ENCODE measurements at regions of chr9 and their contacts with region 1.

Region 1: GRCh38 chr9:98097836-98098235 is 21.2 kb downstream of the TRIM14 start:
- DNase-seq: peak in 1 of 3 donors; percentile 15
- H3K4me3 ChIP-seq: no peak overlapping the region
- H3K27ac ChIP-seq: no peak overlapping the region
- H3K4me1 ChIP-seq: peaks cover 17 to 34% (median 31%) of the 10 kb centered on the region in 4 experiments
- H3K27me3 ChIP-seq: no peaks in the 10 kb centered on the region

Region 2: DNA sequence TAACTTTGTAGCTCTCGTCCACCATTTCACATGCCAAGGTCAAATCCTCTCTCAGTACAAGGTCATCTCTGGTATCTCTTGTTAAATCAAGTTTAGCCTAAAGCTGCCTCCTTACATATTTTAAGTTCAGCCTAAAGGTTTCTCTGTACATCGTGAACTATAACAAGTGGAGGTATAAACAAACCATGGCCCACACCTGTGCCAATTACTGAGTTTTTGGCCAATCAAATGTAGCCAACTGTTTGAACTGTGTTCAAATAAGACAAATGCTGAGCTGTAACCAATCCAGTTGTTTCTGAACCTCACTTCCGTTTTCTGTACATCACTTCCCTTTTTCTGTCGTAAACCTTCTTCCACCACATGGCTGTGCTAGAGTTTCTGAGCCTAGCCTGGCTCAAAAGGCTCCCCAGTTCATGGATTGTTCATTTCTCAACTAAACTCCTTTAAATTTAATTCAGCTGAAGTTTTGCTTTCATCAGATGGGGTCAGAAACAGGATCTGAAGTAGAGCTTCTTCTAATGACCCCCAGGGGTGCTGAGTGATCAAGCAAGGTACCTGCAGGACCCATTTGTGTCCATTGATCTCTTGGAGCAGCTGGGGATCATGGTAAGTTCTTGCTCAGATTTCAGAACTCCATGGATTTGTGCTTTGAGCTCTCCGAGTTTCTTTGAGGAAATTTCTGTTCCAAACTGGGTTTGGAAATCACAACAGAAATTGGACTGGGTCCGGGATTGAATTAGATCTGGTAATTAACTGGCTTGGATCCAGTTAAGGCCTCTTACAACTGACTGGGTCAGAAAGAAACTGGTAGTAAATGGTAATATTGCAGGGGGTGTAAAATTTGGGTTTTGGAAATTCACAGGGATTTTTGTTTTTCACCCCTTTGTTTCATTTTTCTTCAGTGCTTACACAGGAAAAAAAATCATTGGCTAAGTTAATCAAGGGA is 52.3 kb before region 1 on chr9:
- CTCF ChIA-PET with region 1: no interaction called
- POLR2A ChIA-PET with region 1: no interaction called
- DNase-seq: peak; percentile 88 to 96 (median 94)
- H3K4me3 ChIP-seq: peak overlapping the region in 6 of 7 experiments; percentile 51 to 79 (median 70)
- H3K27ac ChIP-seq: peak overlapping the region; percentile 47 to 71
- H3K4me1 ChIP-seq: peaks cover 19 to 60% (median 52%) of the 10 kb centered on the region in 4 experiments
- H3K27me3 ChIP-seq: no peaks in the 10 kb centered on the region

Region 3: GRCh38 chr9:98087420-98088354 is 10.1 kb before region 1 on chr9:
- CTCF ChIA-PET with region 1: interaction called, 15 read pairs
- POLR2A ChIA-PET with region 1: interaction called, 5 read pairs
- DNase-seq: peak; percentile 81 to 93 (median 90)
- H3K4me3 ChIP-seq: peak overlapping the region in 3 of 7 experiments; percentile 45 to 61 (median 56)
- H3K27ac ChIP-seq: no peak overlapping the region
- H3K4me1 ChIP-seq: peaks cover 0 to 10% (median 4%) of the 10 kb centered on the region in 4 experiments
- H3K27me3 ChIP-seq: no peaks in the 10 kb centered on the region